ENCODE measurements at regions of chr20 and their contacts with region 1.

Region 1: GRCh38 chr20:35463455-35464300 is 8.3 kb downstream of the CEP250 start:
- DNase-seq: peak; percentile 74
- ATAC-seq: peak; percentile 90 to 93
- H3K4me3 ChIP-seq: no peak overlapping the region
- H3K27ac ChIP-seq: 0 out of 6 replicates have a peak overlapping the region, but pooled peaks of 1 of the 2 experiments have one; percentile 6
- H3K4me1 ChIP-seq: peaks cover 21% of the 10 kb centered on the region
- CTCF ChIP-seq: peak; percentile 83
- EP300 ChIP-seq: no peak
- POLR2A ChIP-seq: no peak
- RAD21 ChIP-seq: peak; percentile 77 to 80

Region 2: GRCh38 chr20:35447082-35447789 is 16.4 kb before region 1 on chr20:
- CTCF ChIA-PET with region 1: interaction called, 15 read pairs
- POLR2A ChIA-PET with region 1: no interaction called
- DNase-seq: peak; percentile 77 to 86
- ATAC-seq: peak; percentile 95
- H3K4me3 ChIP-seq: peak overlapping the region; percentile 38
- H3K27ac ChIP-seq: peak overlapping the region; percentile 59 to 77
- H3K4me1 ChIP-seq: no peaks in the 10 kb centered on the region
- CTCF ChIP-seq: peak; percentile 84
- EP300 ChIP-seq: no peak
- POLR2A ChIP-seq: no peak
- RAD21 ChIP-seq: peak; percentile 71 to 73

Region 3: DNA sequence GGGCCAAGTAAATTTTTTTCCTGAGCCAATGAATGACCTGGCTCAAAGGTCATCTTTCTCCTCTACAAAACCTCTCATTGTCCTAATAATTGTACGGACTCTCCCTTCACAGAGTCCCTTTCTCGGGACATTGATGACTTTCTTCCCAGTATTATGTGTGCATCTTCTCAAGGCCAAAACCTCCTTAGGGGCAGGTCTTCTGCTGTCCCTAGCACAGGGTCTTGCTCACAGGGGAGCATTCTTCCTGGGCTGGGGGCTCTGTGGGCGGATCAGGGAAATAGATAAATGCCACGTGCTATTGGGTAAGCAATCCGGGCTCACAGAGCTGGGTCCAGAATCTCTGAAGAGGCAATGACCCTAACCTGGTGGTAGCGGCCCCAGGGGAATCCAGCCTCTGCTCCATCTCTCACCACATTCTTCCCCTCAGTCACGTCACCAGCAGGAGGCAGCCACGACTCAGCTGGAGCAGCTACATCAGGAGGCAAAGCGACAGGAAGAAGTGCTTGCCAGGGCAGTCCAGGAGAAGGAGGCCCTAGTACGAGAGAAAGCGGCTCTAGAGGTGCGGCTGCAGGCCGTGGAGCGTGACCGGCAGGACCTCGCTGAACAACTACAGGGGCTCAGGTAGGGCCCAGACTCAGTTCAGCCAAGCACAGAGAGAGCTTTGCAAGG is 15.3 kb after region 1 on chr20:
- CTCF ChIA-PET with region 1: interaction called, 39 read pairs
- POLR2A ChIA-PET with region 1: no interaction called
- DNase-seq: peak in 1 of 2 experiments; percentile 26
- ATAC-seq: peak; percentile 47; a peak in 4 of 6 replicates
- H3K4me3 ChIP-seq: no peak overlapping the region
- H3K27ac ChIP-seq: no peak overlapping the region
- H3K4me1 ChIP-seq: no peaks in the 10 kb centered on the region
- CTCF ChIP-seq: no peak; the same call in 2 of the 3 replicates
- EP300 ChIP-seq: no peak
- POLR2A ChIP-seq: no peak
- RAD21 ChIP-seq: peak in 1 of 2 experiments; percentile 23; a peak in 1 of 5 replicates

Region 4: GRCh38 chr20:35497780-35498189 is 34.1 kb after region 1 on chr20:
- CTCF ChIA-PET with region 1: interaction called, 13 read pairs
- POLR2A ChIA-PET with region 1: no interaction called
- DNase-seq: no peak
- ATAC-seq: no peak
- H3K4me3 ChIP-seq: no peak overlapping the region
- H3K27ac ChIP-seq: no peak overlapping the region
- H3K4me1 ChIP-seq: no peaks in the 10 kb centered on the region
- CTCF ChIP-seq: no peak
- EP300 ChIP-seq: no peak
- POLR2A ChIP-seq: no peak
- RAD21 ChIP-seq: no peak

Region 5: GRCh38 chr20:35511814-35512420 is 48.2 kb after region 1 on chr20:
- CTCF ChIA-PET with region 1: interaction called, 11 read pairs
- POLR2A ChIA-PET with region 1: no interaction called
- DNase-seq: peak; percentile 34 to 58
- ATAC-seq: peak; percentile 41 to 57; a peak in 3 of 6 replicates
- H3K4me3 ChIP-seq: no peak overlapping the region
- H3K27ac ChIP-seq: no peak overlapping the region
- H3K4me1 ChIP-seq: peaks cover 11% of the 10 kb centered on the region; the same call in 2 of the 3 replicates
- CTCF ChIP-seq: peak; percentile 62
- EP300 ChIP-seq: no peak
- POLR2A ChIP-seq: no peak
- RAD21 ChIP-seq: peak; percentile 66 to 79

Region 6: GRCh38 chr20:36305602-36306551 is 842.2 kb after region 1 on chr20 and contains the start of gene DLGAP4:
- CTCF ChIA-PET with region 1: no interaction called
- POLR2A ChIA-PET with region 1: no interaction called
- DNase-seq: no peak
- ATAC-seq: peak in 1 of 2 experiments; percentile 13; a peak in 1 of 6 replicates
- H3K4me3 ChIP-seq: peak within 1 kb of the TSS; percentile 51
- H3K27ac ChIP-seq: peak within 1 kb of the TSS; percentile 3 to 75; a peak in 4 of 6 replicates
- H3K4me1 ChIP-seq: peaks cover 11% of the 10 kb centered on the region; the same call in 1 of the 3 replicates
- CTCF ChIP-seq: no peak; the same call in 2 of the 3 replicates
- EP300 ChIP-seq: no peak
- POLR2A ChIP-seq: no peak
- RAD21 ChIP-seq: peak in 1 of 2 experiments; percentile 25; a peak in 1 of 5 replicates
- polyA plus RNA-seq, gene DLGAP4: 11.9 and 15.8 TPM in 2 replicates